ENCODE measurements at regions of chr6 and their contacts with region 1.

Region 1: GRCh38 chr6:593139-593906 is 63.6 kb downstream of the HUS1B start:
- DNase-seq: peak; percentile 25 to 44 (median 32)
- H3K4me3 ChIP-seq: no peak overlapping the region
- H3K4me3 Mint-ChIP-seq: no peak overlapping the region
- H3K27ac ChIP-seq: no peak overlapping the region
- H3K27ac Mint-ChIP-seq: no peak overlapping the region
- H3K4me1 ChIP-seq: no peaks in the 10 kb centered on the region
- H3K4me1 Mint-ChIP-seq: no peaks in the 10 kb centered on the region
- H3K27me3 ChIP-seq: no peaks in the 10 kb centered on the region
- H3K27me3 Mint-ChIP-seq: peaks cover 0 to 1% (median 0%) of the 10 kb centered on the region in 3 donors
- CTCF ChIP-seq: peak; percentile 84

Region 2: DNA sequence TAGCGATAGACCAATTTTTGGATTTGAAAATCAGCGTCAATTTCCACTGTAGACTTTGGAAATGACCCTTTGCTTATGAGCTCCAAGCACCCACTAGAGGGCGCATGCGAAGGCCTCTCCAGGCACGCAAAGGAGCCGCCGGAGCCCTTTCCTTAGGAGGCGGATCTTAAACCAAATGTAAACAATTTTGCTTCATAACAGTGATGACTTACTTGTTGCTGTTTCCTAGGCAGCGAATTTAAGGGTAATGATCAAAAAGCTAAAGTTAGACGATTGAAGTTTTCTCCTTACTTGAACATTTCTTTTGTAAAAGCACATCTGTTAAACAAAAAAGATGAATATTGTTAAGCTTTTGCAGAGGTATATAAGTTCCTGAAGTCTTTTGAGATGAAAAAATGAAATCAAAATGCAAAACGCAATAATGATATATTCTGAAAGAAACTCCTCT is 128.8 kb after region 1 on chr6:
- intact Hi-C with region 1: no loop called
- DNase-seq: peak; percentile 51 to 62 (median 61)
- H3K4me3 ChIP-seq: no peak overlapping the region
- H3K4me3 Mint-ChIP-seq: peak overlapping the region in 1 of 2 donors; percentile 47
- H3K27ac ChIP-seq: no peak overlapping the region
- H3K27ac Mint-ChIP-seq: no peak overlapping the region
- H3K4me1 ChIP-seq: peaks cover 0 to 7% of the 10 kb centered on the region in 2 donors
- H3K4me1 Mint-ChIP-seq: peaks cover 6% of the 10 kb centered on the region
- H3K27me3 ChIP-seq: peaks cover 3 to 8% of the 10 kb centered on the region in 2 donors
- H3K27me3 Mint-ChIP-seq: peaks cover 5 to 15% (median 11%) of the 10 kb centered on the region in 3 donors
- CTCF ChIP-seq: peak; percentile 95

Region 3: DNA sequence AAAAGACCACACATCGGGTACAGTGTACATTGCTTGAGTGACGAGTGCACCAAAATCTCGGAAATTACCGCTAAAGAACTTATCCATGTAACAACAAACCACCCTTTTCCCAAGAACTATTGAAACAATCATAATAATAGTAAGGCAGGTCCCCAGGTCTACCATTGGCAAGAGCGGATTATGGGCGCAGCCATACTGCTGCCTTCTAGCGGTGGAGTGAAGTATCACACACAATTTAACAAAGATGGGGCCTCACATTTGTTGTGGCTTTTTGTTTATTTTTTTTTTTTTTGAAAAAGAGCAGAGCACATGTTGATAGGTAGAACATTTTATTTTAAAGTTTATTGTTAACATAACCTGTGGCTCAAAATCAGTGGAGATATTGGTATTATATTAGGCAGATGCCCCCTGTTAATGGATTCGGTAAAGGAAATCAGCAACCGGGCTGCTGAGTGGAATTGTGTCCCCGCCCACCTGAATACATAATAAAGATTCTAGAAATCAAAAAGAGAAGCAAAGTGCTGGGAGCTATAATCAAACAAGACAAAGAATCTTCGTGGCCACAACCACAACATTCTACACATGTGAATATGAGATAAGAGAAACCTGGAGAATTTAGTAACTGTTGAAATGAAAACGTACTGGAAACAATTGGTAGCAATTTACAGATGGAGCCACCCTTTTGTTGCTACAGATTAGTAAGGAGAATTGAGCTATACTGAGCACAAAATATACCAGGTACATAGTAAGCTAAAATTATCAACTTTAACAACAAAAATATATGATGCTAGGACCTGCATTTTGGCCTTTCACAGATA is 193.8 kb after region 1 on chr6:
- intact Hi-C with region 1: loop called in 1 of 2 experiments (anchors 10 kb)
- DNase-seq: no peak
- H3K4me3 ChIP-seq: no peak overlapping the region
- H3K4me3 Mint-ChIP-seq: no peak overlapping the region
- H3K27ac ChIP-seq: no peak overlapping the region
- H3K27ac Mint-ChIP-seq: no peak overlapping the region
- H3K4me1 ChIP-seq: no peaks in the 10 kb centered on the region
- H3K4me1 Mint-ChIP-seq: peaks cover 3% of the 10 kb centered on the region
- H3K27me3 ChIP-seq: peaks cover under 1% of the 10 kb centered on the region in 2 donors
- H3K27me3 Mint-ChIP-seq: peaks cover 4 to 25% (median 24%) of the 10 kb centered on the region in 3 donors
- CTCF ChIP-seq: peak; percentile 64

Region 4: DNA sequence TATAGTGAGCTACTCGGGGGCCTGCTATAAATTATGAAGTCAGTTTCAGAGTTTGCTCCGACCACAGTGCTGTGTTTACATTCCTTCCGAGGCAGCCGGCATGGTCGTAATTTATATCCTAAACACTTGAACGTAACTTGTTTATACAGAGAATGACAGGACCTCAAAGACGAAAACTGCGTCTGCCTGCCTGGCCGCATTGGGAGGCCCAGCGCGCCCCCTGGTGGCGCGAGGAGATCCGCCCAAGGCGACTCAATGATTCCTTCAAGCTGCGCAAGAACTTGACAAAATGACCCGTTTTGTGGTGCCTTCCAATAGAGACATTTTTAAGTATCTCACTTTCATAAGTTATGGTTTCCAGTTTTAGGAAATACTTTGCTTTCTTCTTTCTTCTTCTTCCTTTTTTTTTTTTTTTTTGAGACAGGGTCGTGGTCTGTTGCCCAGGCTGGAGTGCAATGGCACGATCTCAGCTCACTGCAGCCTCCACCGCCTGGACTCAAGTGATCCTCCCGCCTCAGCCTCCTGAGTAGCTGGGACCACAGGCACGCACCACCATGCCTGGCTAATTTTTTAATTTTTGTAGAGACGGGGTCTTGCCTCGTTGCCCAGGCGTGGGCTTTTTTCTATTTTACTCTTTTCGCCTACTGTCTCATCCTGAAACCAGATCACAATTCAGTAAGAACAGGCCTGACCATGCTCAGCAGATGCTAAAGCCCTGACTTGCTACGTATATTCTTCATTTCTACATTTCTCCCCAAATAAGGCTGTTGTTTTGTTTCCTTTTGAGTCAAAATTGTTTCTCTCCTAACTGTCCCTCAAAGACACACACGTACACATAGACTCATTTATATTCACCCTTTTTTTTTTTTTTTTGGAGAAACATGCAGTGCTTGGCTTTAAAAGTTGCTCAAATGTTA is 803.9 kb after region 1 on chr6:
- intact Hi-C with region 1: loop called (anchors 5 to 10 kb)
- DNase-seq: peak; percentile 48 to 68 (median 53)
- H3K4me3 ChIP-seq: no peak overlapping the region
- H3K4me3 Mint-ChIP-seq: peak overlapping the region in 1 of 2 donors; percentile 83
- H3K27ac ChIP-seq: no peak overlapping the region
- H3K27ac Mint-ChIP-seq: no peak overlapping the region
- H3K4me1 ChIP-seq: peaks cover 0 to 6% of the 10 kb centered on the region in 2 donors
- H3K4me1 Mint-ChIP-seq: peaks cover 8% of the 10 kb centered on the region
- H3K27me3 ChIP-seq: peaks cover 67 to 92% of the 10 kb centered on the region in 2 donors
- H3K27me3 Mint-ChIP-seq: peaks cover 60 to 79% (median 69%) of the 10 kb centered on the region in 3 donors
- CTCF ChIP-seq: peak; percentile 95

Region 5: DNA sequence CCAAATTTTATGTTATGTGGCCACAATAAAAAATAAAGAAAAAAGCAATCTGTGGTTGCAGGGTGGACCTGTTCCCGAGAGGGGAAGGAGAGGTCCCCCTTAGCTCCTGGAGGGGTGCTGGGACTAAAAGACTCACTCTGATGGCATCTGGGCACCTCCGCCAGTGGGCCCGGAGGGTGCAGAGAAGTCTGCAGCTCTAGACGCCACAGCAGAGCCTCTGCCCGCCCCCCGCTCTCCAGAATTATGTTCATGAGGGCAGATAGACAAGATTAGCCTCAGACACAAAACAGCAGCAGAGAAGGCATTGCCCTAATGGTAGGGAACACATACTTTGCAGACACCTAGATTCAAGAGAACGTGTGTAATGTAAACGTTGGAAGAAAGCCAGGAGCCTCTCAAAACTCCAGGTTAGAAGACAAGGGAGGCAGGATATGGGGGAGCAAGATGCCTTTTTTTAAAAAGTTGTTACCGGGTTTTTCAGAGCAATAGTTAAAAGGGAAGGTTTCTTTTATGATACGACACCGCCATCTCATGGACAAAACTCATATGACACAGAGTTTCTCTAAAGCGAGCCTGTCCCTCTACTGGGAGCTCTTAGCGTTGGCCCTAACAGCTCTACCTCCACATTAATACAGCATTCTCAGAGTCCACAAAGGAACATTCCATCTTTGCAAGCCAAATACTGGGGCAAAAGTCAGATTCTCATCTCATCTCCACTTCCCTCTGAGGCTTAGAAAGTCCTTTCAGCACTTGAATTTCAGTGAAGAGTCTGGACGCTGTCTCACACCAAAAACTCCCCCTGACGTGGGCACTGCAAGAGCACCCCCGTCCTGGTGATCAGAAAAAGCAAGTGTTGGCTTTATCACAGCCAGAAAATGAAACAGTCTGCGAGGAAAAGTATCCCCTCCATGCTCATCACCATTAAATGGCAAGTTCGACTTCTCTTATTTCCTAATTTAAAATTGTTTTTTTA is 843.3 kb after region 1 on chr6:
- intact Hi-C with region 1: loop called in 1 of 2 experiments (anchors 5 kb)
- DNase-seq: peak; percentile 18 to 39 (median 36)
- H3K4me3 ChIP-seq: no peak overlapping the region
- H3K4me3 Mint-ChIP-seq: no peak overlapping the region
- H3K27ac ChIP-seq: no peak overlapping the region
- H3K27ac Mint-ChIP-seq: no peak overlapping the region
- H3K4me1 ChIP-seq: no peaks in the 10 kb centered on the region
- H3K4me1 Mint-ChIP-seq: no peaks in the 10 kb centered on the region
- H3K27me3 ChIP-seq: peaks cover 7 to 14% of the 10 kb centered on the region in 2 donors
- H3K27me3 Mint-ChIP-seq: peaks cover 29 to 37% (median 36%) of the 10 kb centered on the region in 3 donors
- CTCF ChIP-seq: peak; percentile 78

Measured in CD14-positive monocyte (primary cell).